HCT116 (cell line): ENCODE measurements at regions of chr4 and their contacts with region 1.

Region 1: GRCh38 chr4:47704693-47705325 is 133.1 kb downstream of the CORIN start:
- DNase-seq: no peak
- ATAC-seq: peak; percentile 93
- H3K4me3 ChIP-seq: no peak overlapping the region
- H3K27ac ChIP-seq: no peak overlapping the region
- H3K4me1 ChIP-seq: no peaks in the 10 kb centered on the region
- H3K27me3 ChIP-seq: no peaks in the 10 kb centered on the region
- CTCF ChIP-seq: peak; percentile 22 to 47 (median 40); a peak in 4 of 6 replicates
- POLR2A ChIP-seq: no peak
- RAD21 ChIP-seq: peak; percentile 55

Region 2: GRCh38 chr4:47088298-47088697 is 616.5 kb before region 1 on chr4:
- CTCF ChIA-PET with region 1: no interaction called
- POLR2A ChIA-PET with region 1: no interaction called
- RAD21 ChIA-PET with region 1: no interaction called
- intact Hi-C with region 1: no loop called
- DNase-seq: no peak
- ATAC-seq: no peak
- H3K4me3 ChIP-seq: no peak overlapping the region
- H3K27ac ChIP-seq: no peak overlapping the region
- H3K4me1 ChIP-seq: no peaks in the 10 kb centered on the region
- H3K27me3 ChIP-seq: no peaks in the 10 kb centered on the region
- CTCF ChIP-seq: no peak
- POLR2A ChIP-seq: no peak
- RAD21 ChIP-seq: no peak

Region 3: DNA sequence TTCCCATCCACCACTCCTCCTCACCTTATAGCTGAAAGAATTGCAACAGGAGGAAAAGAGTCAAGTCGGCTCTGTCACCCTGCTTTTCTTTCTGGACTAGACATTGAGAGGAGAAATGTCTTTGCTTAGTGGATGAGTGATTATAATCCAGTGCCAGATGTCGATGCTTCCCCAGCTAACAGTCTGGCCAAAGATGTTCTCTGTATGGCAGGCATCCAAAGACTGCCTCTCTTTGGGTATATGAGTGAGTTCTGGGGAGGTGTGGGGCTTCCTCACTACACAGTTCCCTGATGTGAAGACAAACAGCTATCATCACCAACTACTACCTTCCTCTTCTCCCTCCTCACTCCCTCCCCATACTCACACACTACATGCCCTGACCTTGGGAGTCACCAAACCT is 332.2 kb before region 1 on chr4:
- CTCF ChIA-PET with region 1: no interaction called
- POLR2A ChIA-PET with region 1: no interaction called
- RAD21 ChIA-PET with region 1: no interaction called
- intact Hi-C with region 1: no loop called
- DNase-seq: no peak
- ATAC-seq: no peak
- H3K4me3 ChIP-seq: no peak overlapping the region
- H3K27ac ChIP-seq: no peak overlapping the region
- H3K4me1 ChIP-seq: no peaks in the 10 kb centered on the region
- H3K27me3 ChIP-seq: peaks cover 9% of the 10 kb centered on the region; the same call in 1 of the 2 replicates
- CTCF ChIP-seq: no peak
- POLR2A ChIP-seq: no peak
- RAD21 ChIP-seq: no peak

Region 4: DNA sequence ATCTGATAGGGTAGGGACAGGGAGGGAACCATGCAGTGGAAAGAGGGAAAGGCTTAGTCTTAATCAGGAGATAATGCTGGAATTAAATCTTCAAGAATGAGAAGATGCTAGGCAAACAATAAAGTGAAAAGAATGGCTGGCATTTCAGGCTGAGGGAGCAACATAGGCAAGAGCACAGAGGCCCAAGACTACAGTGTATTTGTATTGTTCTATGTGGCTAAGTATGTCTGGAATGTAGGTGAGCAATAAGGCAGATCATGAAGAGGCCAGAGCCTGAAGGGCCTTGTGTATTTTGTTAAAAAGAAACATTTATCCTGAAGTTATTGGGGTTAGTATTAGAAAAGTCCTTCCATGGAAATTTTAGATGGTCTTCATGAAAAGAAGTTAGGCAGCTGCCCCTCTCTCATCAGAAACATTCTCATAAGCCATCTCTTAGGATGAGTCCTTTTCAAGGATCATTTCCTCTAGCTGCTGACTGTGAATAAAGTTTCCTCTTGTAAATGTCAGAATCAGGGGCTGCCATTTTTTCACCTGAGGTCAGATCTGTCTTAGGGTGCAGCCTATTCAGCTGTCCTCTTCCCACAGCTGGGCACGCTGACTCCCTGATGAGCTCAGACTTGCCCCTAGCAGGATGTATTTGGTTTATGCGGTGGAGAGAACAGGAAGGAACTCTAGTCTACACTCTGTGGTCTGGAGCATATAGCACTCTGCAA is 173.4 kb before region 1 on chr4:
- CTCF ChIA-PET with region 1: no interaction called
- POLR2A ChIA-PET with region 1: no interaction called
- RAD21 ChIA-PET with region 1: no interaction called
- intact Hi-C with region 1: no loop called
- DNase-seq: no peak
- ATAC-seq: peak; percentile 80
- H3K4me3 ChIP-seq: no peak overlapping the region
- H3K27ac ChIP-seq: no peak overlapping the region
- H3K4me1 ChIP-seq: peaks cover 0 to 10% of the 10 kb centered on the region in 2 experiments; a peak in 2 of 4 replicates
- H3K27me3 ChIP-seq: no peaks in the 10 kb centered on the region
- CTCF ChIP-seq: no peak
- POLR2A ChIP-seq: no peak
- RAD21 ChIP-seq: no peak

Region 5: GRCh38 chr4:47836641-47837093 is 131.9 kb after region 1 on chr4:
- CTCF ChIA-PET with region 1: no interaction called
- POLR2A ChIA-PET with region 1: no interaction called
- RAD21 ChIA-PET with region 1: no interaction called
- intact Hi-C with region 1: loop called (anchors 10 kb)
- DNase-seq: no peak
- ATAC-seq: peak; percentile 74
- H3K4me3 ChIP-seq: no peak overlapping the region
- H3K27ac ChIP-seq: no peak overlapping the region
- H3K4me1 ChIP-seq: no peaks in the 10 kb centered on the region
- H3K27me3 ChIP-seq: no peaks in the 10 kb centered on the region
- CTCF ChIP-seq: peak in 1 of 3 experiments; percentile 27; a peak in 2 of 6 replicates
- POLR2A ChIP-seq: no peak
- RAD21 ChIP-seq: no peak

Region 6: DNA sequence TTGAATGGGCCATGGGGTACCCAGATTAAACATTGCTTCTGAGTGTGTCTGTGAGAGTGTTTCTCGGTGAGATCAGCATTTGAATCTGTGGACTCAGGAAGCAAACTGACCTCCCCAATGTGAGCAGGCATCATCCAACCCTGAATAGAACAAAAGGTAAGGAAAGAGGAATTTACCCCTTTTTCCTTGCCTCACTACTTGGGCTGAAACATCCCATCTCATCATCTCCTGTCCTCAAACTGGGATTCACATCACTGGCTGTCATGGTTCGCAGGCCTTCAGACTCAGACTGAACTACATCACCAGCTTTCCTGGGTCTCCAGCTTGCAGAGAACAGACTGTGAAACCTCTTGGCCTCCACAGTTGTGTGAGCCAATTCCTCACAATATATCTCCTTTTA is 517.7 kb after region 1 on chr4:
- CTCF ChIA-PET with region 1: no interaction called
- POLR2A ChIA-PET with region 1: no interaction called
- RAD21 ChIA-PET with region 1: no interaction called
- intact Hi-C with region 1: no loop called
- DNase-seq: no peak
- ATAC-seq: no peak
- H3K4me3 ChIP-seq: no peak overlapping the region
- H3K27ac ChIP-seq: no peak overlapping the region
- H3K4me1 ChIP-seq: peaks cover 0 to 15% of the 10 kb centered on the region in 2 experiments; a peak in 3 of 4 replicates
- H3K27me3 ChIP-seq: no peaks in the 10 kb centered on the region
- CTCF ChIP-seq: no peak
- POLR2A ChIP-seq: no peak
- RAD21 ChIP-seq: no peak